ENCODE measurements at regions of chr22 and their contacts with region 1.

Region 1: GRCh38 chr22:39123751-39124601 is 26.9 kb downstream of the APOBEC3H start:
- ATAC-seq: peak in 5 of 8 experiments; percentile 15 to 56 (median 39)
- H3K4me3 ChIP-seq: no peak overlapping the region
- H3K27ac ChIP-seq: peak overlapping the region in 1 of 2 donors; percentile 6
- H3K4me1 ChIP-seq: peaks cover 0 to 13% of the 10 kb centered on the region in 2 donors

Region 2: GRCh38 chr22:39013942-39014722 is 109.8 kb before region 1 on chr22 and contains the start of gene APOBEC3C:
- in situ Hi-C with region 1: loop called in 3 of 9 experiments (anchors 10 to 25 kb)
- ATAC-seq: peak; percentile 93 to 96 (median 94)
- H3K4me3 ChIP-seq: peak within 1 kb of the TSS in 1 of 5 donors; percentile 2
- H3K27ac ChIP-seq: peak within 1 kb of the TSS in 1 of 2 donors; percentile 64
- H3K4me1 ChIP-seq: peaks cover 24 to 26% of the 10 kb centered on the region in 2 donors
- total RNA-seq, gene APOBEC3C: 0.96 to 59.2 (median 4.5) TPM